Vagina (tissue), 2 donors: ENCODE measurements at regions of chr5 and their contacts with region 1.

Region 1: DNA sequence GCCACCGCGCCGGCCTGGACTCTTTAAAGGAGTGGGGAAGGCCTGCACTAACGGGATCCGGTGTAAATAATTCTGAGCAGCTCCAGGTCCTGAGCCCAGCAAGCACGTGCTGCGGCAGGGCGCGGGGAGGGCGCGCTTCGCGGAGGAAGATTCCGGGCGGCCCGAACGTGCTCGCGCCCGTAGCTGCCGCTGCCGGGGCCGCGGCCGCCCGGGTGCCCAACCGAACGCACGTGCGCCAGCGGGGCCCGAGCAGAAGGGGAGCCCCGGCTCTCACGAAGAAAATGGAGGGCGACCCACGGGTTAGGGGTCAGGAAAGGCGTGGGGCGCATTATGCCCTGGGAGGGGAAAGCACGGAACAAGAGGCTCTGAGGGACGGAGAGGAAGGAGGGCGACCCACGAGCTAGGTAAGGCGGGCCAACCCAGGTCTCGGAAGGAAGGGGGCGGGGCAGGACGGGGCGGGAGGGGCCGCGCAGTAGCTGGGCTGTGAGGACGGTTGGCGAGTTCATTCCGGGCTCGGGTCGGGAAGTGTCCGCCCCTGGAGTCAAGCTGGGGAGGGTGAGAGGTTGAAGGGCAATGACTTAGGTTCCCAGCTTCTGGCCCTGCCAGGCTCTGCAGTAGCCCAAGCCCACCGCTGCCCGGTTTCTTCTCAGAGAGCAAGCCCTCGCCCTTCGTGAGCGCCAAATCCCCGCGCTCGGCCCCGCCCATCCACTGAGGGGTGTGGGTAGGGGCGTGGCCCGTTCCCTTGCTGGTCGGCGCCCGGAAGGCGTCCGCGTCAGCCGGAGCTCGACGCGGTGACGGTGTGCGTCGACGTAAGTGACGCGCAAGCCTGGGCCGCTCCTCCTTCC is at the start of gene ZNF131:
- DNase-seq: peak in 1 of 2 donors; percentile 97
- H3K4me3 ChIP-seq: peak within 1 kb of the TSS; percentile 78 to 88
- H3K27ac ChIP-seq: peak within 1 kb of the TSS; percentile 99
- H3K4me1 ChIP-seq: peaks cover 35% of the 10 kb centered on the region
- H3K27me3 ChIP-seq: no peaks in the 10 kb centered on the region
- CTCF ChIP-seq: no peak
- POLR2A ChIP-seq: peak in 1 of 2 donors; percentile 56
- total RNA-seq, gene ZNF131: 44.4 TPM

Region 2: GRCh38 chr5:42950440-42951292 is 170.3 kb before region 1 on chr5:
- intact Hi-C with region 1: loop called (anchors 5 kb)
- DNase-seq: peak in 1 of 2 donors; percentile 94
- H3K4me3 ChIP-seq: peak overlapping the region; percentile 45 to 63
- H3K27ac ChIP-seq: peak overlapping the region; percentile 93
- H3K4me1 ChIP-seq: peaks cover 12% of the 10 kb centered on the region
- H3K27me3 ChIP-seq: no peaks in the 10 kb centered on the region
- CTCF ChIP-seq: no peak
- POLR2A ChIP-seq: no peak

Region 3: DNA sequence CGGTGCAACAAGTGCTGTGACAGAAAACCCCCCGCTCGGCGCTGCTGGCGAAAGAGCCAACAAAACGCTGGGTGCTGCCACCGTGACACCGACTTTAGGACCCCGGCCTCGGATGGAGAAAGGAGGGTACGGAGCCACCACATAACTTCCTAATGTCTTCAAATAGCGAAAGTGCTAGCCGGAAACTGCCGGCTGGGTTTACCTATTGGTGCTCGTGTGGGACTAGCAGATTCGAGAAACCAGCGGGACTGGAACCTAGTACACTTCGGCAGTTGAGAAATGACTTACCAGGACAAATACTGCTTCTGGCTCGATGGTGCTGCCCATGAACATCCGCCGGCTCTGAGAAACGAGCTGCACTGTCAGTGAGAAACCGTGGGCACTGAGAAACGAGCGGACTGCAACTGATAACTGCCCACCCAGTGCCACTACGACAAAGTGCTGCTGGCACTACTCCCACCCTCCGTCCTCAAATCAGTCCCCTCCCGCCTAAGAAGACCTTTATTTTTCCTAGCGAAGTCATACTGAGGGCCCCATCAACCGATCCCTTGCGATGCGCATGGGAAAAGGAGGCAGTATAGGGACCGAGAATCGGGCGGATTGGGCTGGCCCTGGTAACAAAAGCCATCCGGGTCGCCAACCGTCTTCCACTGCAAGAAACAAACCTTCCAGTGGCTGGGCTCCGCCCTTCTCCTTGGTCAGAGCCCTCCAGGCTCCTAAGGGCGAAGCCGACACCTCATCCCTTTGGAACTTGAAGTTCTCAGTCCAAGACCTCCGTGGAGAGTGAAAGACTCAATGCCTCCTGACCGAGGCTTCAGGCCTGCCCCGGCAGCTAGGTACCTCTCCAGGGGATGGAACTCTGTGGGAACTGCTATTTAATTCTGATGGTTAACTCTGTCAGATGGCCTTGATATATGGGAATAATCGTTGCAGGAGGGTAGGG is 53.9 kb before region 1 on chr5:
- intact Hi-C with region 1: loop called (anchors 1 kb)
- DNase-seq: peak in 1 of 2 donors; percentile 98
- H3K4me3 ChIP-seq: peak overlapping the region; percentile 75 to 90
- H3K27ac ChIP-seq: peak overlapping the region; percentile 99
- H3K4me1 ChIP-seq: peaks cover 29% of the 10 kb centered on the region
- H3K27me3 ChIP-seq: no peaks in the 10 kb centered on the region
- CTCF ChIP-seq: no peak
- POLR2A ChIP-seq: peak in 1 of 2 donors; percentile 78

Region 4: GRCh38 chr5:43156388-43156787 is 35.4 kb after region 1 on chr5:
- intact Hi-C with region 1: no loop called
- DNase-seq: no peak
- H3K4me3 ChIP-seq: no peak overlapping the region
- H3K27ac ChIP-seq: no peak overlapping the region
- H3K4me1 ChIP-seq: no peaks in the 10 kb centered on the region
- H3K27me3 ChIP-seq: no peaks in the 10 kb centered on the region
- CTCF ChIP-seq: no peak
- POLR2A ChIP-seq: no peak

Region 5: GRCh38 chr5:43171914-43172313 is 51.0 kb after region 1 on chr5:
- intact Hi-C with region 1: no loop called
- DNase-seq: no peak
- H3K4me3 ChIP-seq: no peak overlapping the region
- H3K27ac ChIP-seq: no peak overlapping the region
- H3K4me1 ChIP-seq: no peaks in the 10 kb centered on the region
- H3K27me3 ChIP-seq: no peaks in the 10 kb centered on the region
- CTCF ChIP-seq: no peak
- POLR2A ChIP-seq: no peak

Region 6: DNA sequence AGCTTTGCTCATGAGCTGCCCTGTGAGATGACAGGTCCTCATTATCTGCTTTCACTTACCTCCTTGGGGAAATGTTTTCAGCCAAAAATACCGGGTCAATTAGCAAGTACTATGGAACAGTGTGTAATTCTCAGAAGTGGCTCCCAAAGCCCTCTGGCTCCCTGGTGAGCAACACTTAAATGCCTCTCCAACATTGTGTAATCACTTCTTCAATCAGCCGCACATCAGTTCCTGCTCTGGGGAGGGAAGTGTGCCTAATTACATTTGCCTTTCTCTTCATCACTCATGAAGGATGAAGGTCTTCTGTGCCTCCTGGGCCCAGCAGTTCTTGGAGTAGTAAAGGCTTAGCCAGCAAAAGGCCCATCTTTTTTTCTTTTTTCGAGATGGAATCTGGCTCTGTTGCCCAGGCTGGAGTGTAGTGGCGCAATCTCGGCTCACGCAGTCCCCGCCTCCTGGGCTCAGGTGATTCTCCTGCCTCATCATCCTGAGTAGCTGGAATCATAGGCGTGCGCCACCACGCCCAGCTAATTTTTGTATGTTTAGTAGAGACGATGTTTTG is 94.2 kb after region 1 on chr5:
- intact Hi-C with region 1: no loop called
- DNase-seq: no peak
- H3K4me3 ChIP-seq: no peak overlapping the region
- H3K27ac ChIP-seq: no peak overlapping the region
- H3K4me1 ChIP-seq: no peaks in the 10 kb centered on the region
- H3K27me3 ChIP-seq: no peaks in the 10 kb centered on the region
- CTCF ChIP-seq: no peak
- POLR2A ChIP-seq: no peak